ENCODE measurements at regions of chr9 and their contacts with region 1.

Region 1: DNA sequence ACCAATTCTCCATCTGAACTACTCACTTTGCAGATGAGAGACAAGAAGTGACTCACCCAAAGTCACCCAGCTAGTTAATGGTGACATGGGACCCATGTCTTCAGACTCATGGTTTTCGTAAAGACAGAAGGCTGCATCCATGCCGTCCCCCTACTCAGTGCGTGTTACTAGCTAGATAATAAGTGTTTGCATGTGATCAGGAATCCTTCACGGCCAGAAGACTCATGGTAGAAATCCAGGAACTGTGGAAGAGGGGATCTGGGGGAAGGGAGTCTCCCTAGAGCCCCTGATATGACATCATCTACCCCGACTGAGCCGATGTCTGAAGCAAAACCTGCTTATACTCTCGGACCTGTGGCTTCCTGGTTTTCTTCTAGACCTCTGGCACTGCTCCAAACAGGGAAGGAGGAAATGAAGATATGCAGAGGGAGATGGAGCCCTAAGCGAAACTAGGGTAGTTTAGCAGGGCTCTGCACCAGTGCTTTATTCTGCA is 3.3 kb downstream of the RNF183 start:
- DNase-seq: peak in 1 of 2 donors; percentile 27
- ATAC-seq: peak in 4 of 8 donors; percentile 15 to 49 (median 31)
- H3K4me3 ChIP-seq: peak overlapping the region in 1 of 10 donors; percentile 20
- H3K27ac ChIP-seq: no peak overlapping the region
- H3K4me1 ChIP-seq: peaks cover 0 to 9% (median 0%) of the 10 kb centered on the region in 9 donors
- H3K27me3 ChIP-seq: no peaks in the 10 kb centered on the region
- CTCF ChIP-seq: no peak

Region 2: GRCh38 chr9:113255438-113255837 is 44.4 kb before region 1 on chr9:
- intact Hi-C with region 1: no loop called
- DNase-seq: no peak
- ATAC-seq: no peak
- H3K4me3 ChIP-seq: no peak overlapping the region
- H3K27ac ChIP-seq: no peak overlapping the region
- H3K4me1 ChIP-seq: no peaks in the 10 kb centered on the region
- H3K27me3 ChIP-seq: no peaks in the 10 kb centered on the region
- CTCF ChIP-seq: no peak

Region 3: DNA sequence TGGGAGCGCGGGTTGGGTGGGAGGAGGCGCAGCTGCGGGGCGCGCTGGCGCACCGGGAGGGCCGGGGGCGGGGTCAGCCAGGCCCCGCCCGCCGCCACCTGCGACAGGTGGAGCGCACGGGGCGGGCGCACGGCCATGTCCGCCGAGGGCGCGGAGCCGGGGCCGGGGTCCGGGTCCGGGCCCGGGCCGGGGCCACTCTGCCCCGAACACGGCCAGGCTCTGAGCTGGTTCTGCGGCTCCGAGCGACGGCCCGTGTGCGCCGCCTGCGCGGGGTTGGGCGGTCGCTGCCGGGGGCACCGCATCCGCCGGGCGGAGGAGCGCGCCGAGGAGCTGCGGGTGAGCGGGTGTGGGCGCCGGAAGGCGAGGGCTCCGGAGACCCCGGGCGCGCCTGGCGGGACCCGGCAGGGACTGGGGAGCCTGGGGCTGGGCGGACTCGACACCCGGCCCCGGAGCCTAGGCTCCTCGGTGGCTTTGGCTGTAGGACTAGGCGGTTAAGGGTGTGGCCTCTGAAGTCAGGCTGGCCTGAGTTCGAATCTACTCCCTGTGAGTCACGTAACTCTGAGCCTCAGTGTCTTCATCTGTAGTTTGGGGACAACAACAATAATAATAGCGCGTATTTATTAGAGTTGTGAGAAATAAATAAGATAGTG is 49.7 kb after region 1 on chr9 and contains the start of gene BSPRY:
- intact Hi-C with region 1: loop called in 1 of 10 experiments (anchors 10 kb)
- DNase-seq: peak in 1 of 2 donors; percentile 23
- ATAC-seq: peak in 5 of 8 donors; percentile 31 to 55 (median 49)
- H3K4me3 ChIP-seq: peak within 1 kb of the TSS; percentile 18 to 57 (median 51)
- H3K27ac ChIP-seq: peak within 1 kb of the TSS in 1 of 10 donors; percentile 26
- H3K4me1 ChIP-seq: peaks cover 0 to 18% (median 5%) of the 10 kb centered on the region in 9 donors
- H3K27me3 ChIP-seq: peaks cover 0 to 34% (median 28%) of the 10 kb centered on the region in 7 donors
- CTCF ChIP-seq: no peak
- total RNA-seq, gene BSPRY: 0.55 to 4.2 (median 1.6) TPM

Region 4: GRCh38 chr9:113664181-113664875 is 364.5 kb after region 1 on chr9:
- intact Hi-C with region 1: loop called in 4 of 10 experiments (anchors 5 to 10 kb)
- DNase-seq: no peak
- ATAC-seq: no peak
- H3K4me3 ChIP-seq: no peak overlapping the region
- H3K27ac ChIP-seq: no peak overlapping the region
- H3K4me1 ChIP-seq: peaks cover 0 to 10% (median 0%) of the 10 kb centered on the region in 9 donors
- H3K27me3 ChIP-seq: no peaks in the 10 kb centered on the region
- CTCF ChIP-seq: no peak

Region 5: GRCh38 chr9:113669522-113670115 is 369.8 kb after region 1 on chr9:
- intact Hi-C with region 1: loop called in 2 of 10 experiments (anchors 5 to 10 kb)
- DNase-seq: no peak
- ATAC-seq: no peak
- H3K4me3 ChIP-seq: no peak overlapping the region
- H3K27ac ChIP-seq: no peak overlapping the region
- H3K4me1 ChIP-seq: peaks cover 0 to 5% (median under 1%) of the 10 kb centered on the region in 9 donors
- H3K27me3 ChIP-seq: no peaks in the 10 kb centered on the region
- CTCF ChIP-seq: no peak

Measured in heart right ventricle (tissue), 16 donors.